Colonic mucosa (tissue), 4 donors: ENCODE measurements at regions of chr10 and their contacts with region 1.

Region 1: GRCh38 chr10:100912605-100913469 is at the start of gene SLF2:
- DNase-seq: peak; percentile 98
- H3K4me3 ChIP-seq: peak within 1 kb of the TSS; percentile 71
- H3K27ac ChIP-seq: peak within 1 kb of the TSS; percentile 89
- H3K4me1 ChIP-seq: no peaks in the 10 kb centered on the region
- H3K27me3 ChIP-seq: no peaks in the 10 kb centered on the region
- CTCF ChIP-seq: no peak
- total RNA-seq, gene SLF2: 15.1 to 21.9 TPM

Region 2: DNA sequence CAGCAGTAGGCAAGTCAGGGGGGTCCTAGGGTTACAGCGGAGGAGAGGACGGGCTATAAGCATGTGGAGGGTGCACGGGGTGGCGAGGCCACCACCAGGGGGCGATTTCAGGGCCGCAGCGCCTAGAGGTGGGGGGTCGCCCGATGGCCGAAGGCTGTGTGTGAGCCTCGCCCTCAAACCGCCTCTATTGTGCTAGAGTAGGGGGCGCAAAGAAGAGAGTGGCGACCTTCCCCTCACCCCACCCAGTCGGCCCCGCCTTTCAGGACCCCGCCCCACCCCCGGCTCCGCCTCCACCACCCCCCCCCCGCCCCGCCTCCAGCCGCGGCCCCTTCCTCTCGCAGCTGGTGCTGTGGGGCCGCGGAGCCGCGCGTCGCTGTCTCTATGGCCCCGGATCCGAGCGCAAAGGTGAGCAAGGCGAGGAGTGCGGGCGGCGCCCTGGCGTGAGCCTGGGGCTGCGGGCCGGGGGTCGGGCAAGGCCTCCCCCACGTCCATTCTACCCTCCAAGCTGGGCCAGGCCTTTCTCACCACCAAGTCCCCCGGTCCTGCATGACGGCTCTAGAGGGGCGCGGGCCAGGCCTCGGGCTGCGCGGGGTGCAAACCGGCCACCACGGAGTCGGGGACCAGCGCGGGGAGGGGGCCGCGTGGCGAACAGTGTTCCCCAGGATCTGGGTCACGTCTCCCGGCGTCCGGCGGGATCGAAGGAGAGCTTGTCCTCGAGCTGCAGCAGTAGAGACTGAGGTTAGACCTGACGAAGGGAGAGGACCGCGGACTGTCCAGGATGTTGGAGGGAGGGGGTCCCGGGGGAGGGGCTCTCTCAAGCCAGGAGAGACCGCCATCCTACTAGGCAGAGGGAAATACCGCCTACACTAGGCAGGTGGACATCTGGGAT is 56.6 kb after region 1 on chr10 and contains the start of gene SEMA4G:
- intact Hi-C with region 1: loop called (anchors 10 kb)
- DNase-seq: peak; percentile 62
- H3K4me3 ChIP-seq: peak within 1 kb of the TSS; percentile 85
- H3K27ac ChIP-seq: peak within 1 kb of the TSS; percentile 92
- H3K4me1 ChIP-seq: no peaks in the 10 kb centered on the region
- H3K27me3 ChIP-seq: no peaks in the 10 kb centered on the region
- CTCF ChIP-seq: peak; percentile 56
- total RNA-seq, gene SEMA4G: 113 to 133 TPM